Calu3 (cell line): ENCODE measurements at regions of chrX and their contacts with region 1.

Region 1: GRCh38 chrX:139187738-139188137 is 342.8 kb upstream of the F9 start:
- DNase-seq: no peak
- H3K4me3 Mint-ChIP-seq: no peak overlapping the region
- H3K27ac Mint-ChIP-seq: no peak overlapping the region
- H3K4me1 Mint-ChIP-seq: no peaks in the 10 kb centered on the region
- H3K27me3 Mint-ChIP-seq: no peaks in the 10 kb centered on the region
- CTCF ChIP-seq: no peak

Region 2: GRCh38 chrX:138037494-138037893 is 1150.2 kb before region 1 on chrX:
- CTCF ChIA-PET with region 1: no interaction called
- intact Hi-C with region 1: no loop called
- DNase-seq: no peak
- H3K4me3 Mint-ChIP-seq: no peak overlapping the region
- H3K27ac Mint-ChIP-seq: no peak overlapping the region
- H3K4me1 Mint-ChIP-seq: no peaks in the 10 kb centered on the region
- H3K27me3 Mint-ChIP-seq: no peaks in the 10 kb centered on the region
- CTCF ChIP-seq: no peak

Region 3: DNA sequence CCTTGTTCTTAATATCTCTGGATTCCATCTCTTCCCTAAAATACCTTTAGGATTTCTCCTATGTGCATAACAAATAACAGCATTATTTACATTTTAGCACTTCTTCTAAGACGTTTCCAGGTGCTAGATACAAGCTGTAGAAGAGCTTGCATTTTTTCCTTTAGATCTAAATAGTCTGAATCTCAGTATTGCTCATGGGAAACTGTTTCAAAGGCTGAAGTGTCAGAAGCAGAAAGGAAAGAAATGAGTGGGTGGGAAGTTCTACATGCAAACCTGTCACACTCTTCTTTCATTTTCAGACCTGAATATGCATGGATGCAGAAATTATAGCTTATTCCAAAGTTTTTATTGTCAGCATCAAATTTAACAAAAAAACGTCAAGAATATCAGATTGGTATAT is 518.0 kb before region 1 on chrX:
- CTCF ChIA-PET with region 1: no interaction called
- intact Hi-C with region 1: loop called (anchors 5 kb)
- DNase-seq: no peak
- H3K4me3 Mint-ChIP-seq: no peak overlapping the region
- H3K27ac Mint-ChIP-seq: no peak overlapping the region
- H3K4me1 Mint-ChIP-seq: no peaks in the 10 kb centered on the region
- H3K27me3 Mint-ChIP-seq: no peaks in the 10 kb centered on the region
- CTCF ChIP-seq: no peak

Region 4: GRCh38 chrX:138794246-138794645 is 393.5 kb before region 1 on chrX:
- CTCF ChIA-PET with region 1: no interaction called
- intact Hi-C with region 1: no loop called
- DNase-seq: no peak
- H3K4me3 Mint-ChIP-seq: no peak overlapping the region
- H3K27ac Mint-ChIP-seq: no peak overlapping the region
- H3K4me1 Mint-ChIP-seq: no peaks in the 10 kb centered on the region
- H3K27me3 Mint-ChIP-seq: no peaks in the 10 kb centered on the region
- CTCF ChIP-seq: no peak